CD8-positive, alpha-beta T cell (primary cell): ENCODE measurements at regions of chr15 and their contacts with region 1.

Region 1: DNA sequence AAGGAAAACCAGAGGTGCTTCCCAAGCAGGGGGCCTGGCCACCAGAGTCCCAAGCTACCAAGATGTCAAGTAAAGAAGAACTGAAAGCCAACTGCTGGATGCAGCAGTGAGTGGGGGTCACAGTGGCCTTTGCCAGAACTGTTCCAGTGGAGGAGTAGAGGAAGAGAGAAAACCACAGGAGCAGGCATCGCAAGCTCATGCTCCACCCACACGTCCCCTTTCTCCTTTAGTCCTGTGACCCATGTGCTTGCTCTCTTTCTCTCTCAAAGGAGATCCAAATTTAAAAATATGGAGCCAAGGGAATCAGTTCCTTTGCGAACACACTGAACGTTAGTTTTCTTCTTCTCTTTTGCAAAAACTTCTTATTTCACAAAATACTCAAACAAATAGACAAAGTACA is 12.4 kb upstream of the ABHD2 start:
- DNase-seq: no peak
- ATAC-seq: no peak
- H3K4me3 ChIP-seq: no peak overlapping the region
- H3K4me3 Mint-ChIP-seq: no peak overlapping the region
- H3K27ac ChIP-seq: no peak overlapping the region
- H3K27ac Mint-ChIP-seq: no peak overlapping the region
- H3K4me1 ChIP-seq: no peaks in the 10 kb centered on the region
- H3K4me1 Mint-ChIP-seq: no peaks in the 10 kb centered on the region
- H3K27me3 ChIP-seq: no peaks in the 10 kb centered on the region
- H3K27me3 Mint-ChIP-seq: peaks cover 5% of the 10 kb centered on the region
- CTCF ChIP-seq: no peak

Region 2: GRCh38 chr15:89112341-89112971 is 36.6 kb after region 1 on chr15:
- CTCF ChIA-PET with region 1: no interaction called
- POLR2A ChIA-PET with region 1: no interaction called
- intact Hi-C with region 1: loop called in 1 of 2 experiments (anchors 5 kb)
- DNase-seq: peak in 1 of 9 experiments; percentile 34
- ATAC-seq: no peak
- H3K4me3 ChIP-seq: no peak overlapping the region
- H3K4me3 Mint-ChIP-seq: no peak overlapping the region
- H3K27ac ChIP-seq: peak overlapping the region in 1 of 2 experiments; percentile 44
- H3K27ac Mint-ChIP-seq: no peak overlapping the region
- H3K4me1 ChIP-seq: peaks cover 9% of the 10 kb centered on the region
- H3K4me1 Mint-ChIP-seq: peaks cover 16% of the 10 kb centered on the region
- H3K27me3 ChIP-seq: no peaks in the 10 kb centered on the region
- H3K27me3 Mint-ChIP-seq: no peaks in the 10 kb centered on the region
- CTCF ChIP-seq: no peak